Transverse colon (tissue), 4 donors: ENCODE measurements at regions of chr10 and their contacts with region 1.

Region 1: DNA sequence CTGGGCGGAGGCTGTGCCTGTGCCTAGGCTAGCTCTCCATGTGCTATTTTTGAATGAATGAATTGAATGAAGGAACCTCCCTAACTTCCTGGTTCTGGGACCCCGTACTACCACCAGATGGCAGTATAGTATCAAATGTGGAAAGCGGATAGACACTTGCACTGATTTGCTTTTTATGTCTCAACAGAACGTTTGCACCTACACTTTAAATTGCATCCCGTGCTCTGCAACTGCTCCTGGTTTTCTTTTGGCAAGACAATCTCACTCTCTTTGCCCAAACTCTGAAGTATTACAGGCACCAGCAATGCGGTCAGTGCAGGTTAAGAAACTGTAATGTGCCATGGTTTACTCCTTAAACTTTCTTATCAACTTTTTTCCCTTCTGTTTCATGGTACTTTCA is 6.5 kb downstream of the FZD8 start:
- DNase-seq: peak; percentile 33
- H3K4me3 ChIP-seq: no peak overlapping the region
- H3K27ac ChIP-seq: no peak overlapping the region
- H3K4me1 ChIP-seq: peaks cover 0 to 17% (median 6%) of the 10 kb centered on the region in 4 donors
- H3K27me3 ChIP-seq: peaks cover 5% of the 10 kb centered on the region
- CTCF ChIP-seq: peak; percentile 87 to 92 (median 91)
- EP300 ChIP-seq: no peak
- POLR2A ChIP-seq: no peak

Region 2: DNA sequence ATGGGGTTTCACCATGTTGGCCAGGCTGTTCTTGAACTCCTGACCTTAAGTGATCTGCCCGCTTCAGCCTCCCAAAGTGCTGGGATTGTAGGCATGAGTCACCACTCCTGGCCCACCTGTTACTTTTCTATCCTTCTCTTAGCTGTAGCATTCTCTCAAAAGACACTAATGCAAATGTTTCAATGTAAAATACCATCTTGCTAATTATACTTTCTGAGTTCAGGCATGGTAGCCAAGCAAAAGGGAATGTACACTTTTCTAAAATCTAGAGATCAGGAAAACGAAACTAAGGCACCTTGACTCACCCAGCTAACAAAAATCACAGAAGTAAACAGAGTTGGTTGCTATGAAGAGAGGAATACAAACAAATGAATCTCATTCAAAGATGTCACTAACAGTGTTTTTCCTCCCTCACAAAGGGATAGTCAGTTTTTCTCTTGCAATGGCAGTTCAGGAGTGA is 1900.1 kb before region 1 on chr10:
- in situ Hi-C with region 1: no loop called
- intact Hi-C with region 1: no loop called
- DNase-seq: no peak
- H3K4me3 ChIP-seq: no peak overlapping the region
- H3K27ac ChIP-seq: no peak overlapping the region
- H3K4me1 ChIP-seq: peaks cover 0 to 13% (median 0%) of the 10 kb centered on the region in 4 donors
- H3K27me3 ChIP-seq: no peaks in the 10 kb centered on the region
- CTCF ChIP-seq: no peak
- EP300 ChIP-seq: no peak
- POLR2A ChIP-seq: no peak

Region 3: GRCh38 chr10:36779234-36779846 is 1143.8 kb after region 1 on chr10:
- in situ Hi-C with region 1: loop called (anchors 5 to 25 kb)
- intact Hi-C with region 1: loop called (anchors 5 kb)
- DNase-seq: peak; percentile 11
- H3K4me3 ChIP-seq: no peak overlapping the region
- H3K27ac ChIP-seq: no peak overlapping the region
- H3K4me1 ChIP-seq: no peaks in the 10 kb centered on the region
- H3K27me3 ChIP-seq: no peaks in the 10 kb centered on the region
- CTCF ChIP-seq: peak; percentile 46 to 62 (median 59)
- EP300 ChIP-seq: no peak
- POLR2A ChIP-seq: no peak

Region 4: GRCh38 chr10:36789974-36790373 is 1154.4 kb after region 1 on chr10:
- in situ Hi-C with region 1: loop called in 3 of 4 experiments (anchors 10 to 25 kb)
- intact Hi-C with region 1: no loop called
- DNase-seq: no peak
- H3K4me3 ChIP-seq: no peak overlapping the region
- H3K27ac ChIP-seq: no peak overlapping the region
- H3K4me1 ChIP-seq: no peaks in the 10 kb centered on the region
- H3K27me3 ChIP-seq: no peaks in the 10 kb centered on the region
- CTCF ChIP-seq: no peak
- EP300 ChIP-seq: no peak
- POLR2A ChIP-seq: no peak

Region 5: DNA sequence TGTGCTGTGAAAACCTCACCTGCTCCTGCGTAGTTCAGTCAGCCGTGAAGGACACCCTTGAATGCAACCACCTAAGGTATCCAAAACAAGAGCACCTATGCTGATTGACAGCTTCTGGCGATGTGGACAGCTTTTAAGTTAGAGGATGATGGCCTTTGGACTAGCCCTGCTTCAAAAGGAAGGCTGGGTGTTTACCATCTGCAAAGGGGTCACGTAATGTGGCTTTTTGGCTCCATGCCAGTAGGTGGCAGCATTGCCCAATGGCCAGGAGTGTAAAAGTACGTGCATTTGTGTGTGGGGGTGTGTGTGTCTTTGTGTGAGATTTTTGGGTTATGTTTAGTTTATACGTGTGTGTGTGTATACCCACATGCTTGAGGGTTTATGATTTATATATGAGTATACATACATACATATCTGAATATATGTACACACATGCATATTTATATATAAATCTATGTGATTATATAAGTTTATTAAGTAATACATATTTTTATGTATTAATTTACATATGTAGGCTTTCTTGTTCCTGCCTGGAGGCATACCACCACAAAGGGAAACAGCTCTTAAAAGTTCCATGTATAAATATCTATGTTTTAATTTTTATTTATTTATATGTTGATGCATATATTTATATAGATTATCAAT is 1253.5 kb after region 1 on chr10:
- in situ Hi-C with region 1: no loop called
- intact Hi-C with region 1: loop called (anchors 10 kb)
- DNase-seq: peak; percentile 13
- H3K4me3 ChIP-seq: no peak overlapping the region
- H3K27ac ChIP-seq: no peak overlapping the region
- H3K4me1 ChIP-seq: no peaks in the 10 kb centered on the region
- H3K27me3 ChIP-seq: no peaks in the 10 kb centered on the region
- CTCF ChIP-seq: no peak
- EP300 ChIP-seq: no peak
- POLR2A ChIP-seq: no peak